ENCODE measurements at regions of chr1 and their contacts with region 1.

Region 1: DNA sequence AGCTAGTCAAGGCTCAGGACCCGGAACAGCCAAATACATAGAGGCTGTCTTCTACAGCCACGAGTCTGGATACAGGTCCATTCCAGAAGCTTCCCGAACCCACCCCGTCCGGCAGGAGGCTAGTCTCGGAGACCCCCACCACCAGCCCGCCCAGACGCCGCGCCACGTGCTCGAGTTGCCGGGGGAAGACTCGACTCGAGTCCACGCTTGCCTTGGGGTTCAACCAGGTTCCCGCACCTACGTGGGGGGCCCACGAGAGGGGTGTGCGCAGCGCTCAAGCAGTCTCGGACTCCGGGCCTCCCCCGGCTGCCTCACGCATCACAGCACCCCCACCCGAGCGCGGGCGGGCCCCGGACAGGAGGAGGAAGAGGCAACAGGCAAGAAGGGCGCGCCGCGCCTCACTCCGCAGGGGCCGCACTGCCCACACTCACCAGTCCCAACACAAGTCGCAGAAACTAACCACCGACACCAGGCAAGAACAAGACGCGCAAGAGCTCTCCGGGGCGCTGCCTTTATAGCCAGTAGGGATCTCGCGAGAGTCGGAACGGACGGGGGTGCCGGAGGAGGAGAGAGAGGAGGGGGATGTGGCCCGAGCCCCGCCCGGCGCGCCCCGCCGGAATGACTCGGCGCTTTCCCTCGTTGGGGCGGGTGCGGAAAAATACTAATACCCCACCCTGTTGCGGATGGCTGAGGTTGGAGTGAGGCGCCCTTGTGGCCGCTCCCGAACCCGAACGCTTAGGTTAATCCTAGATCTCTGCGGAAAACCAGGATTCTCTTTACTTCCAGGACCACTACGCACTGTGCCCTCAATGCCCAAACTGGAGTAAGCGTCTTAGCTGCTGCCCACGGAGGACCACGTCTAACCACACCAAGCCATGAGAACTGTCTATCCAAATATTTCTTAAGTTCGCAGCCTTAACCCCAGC is at the start of gene PRDX1:
- DNase-seq: peak; percentile 98 to 99
- ATAC-seq: peak; percentile 99
- H3K4me3 ChIP-seq: peak within 1 kb of the TSS; percentile 68 to 91
- H3K27ac ChIP-seq: peak within 1 kb of the TSS; percentile 43 to 100
- H3K4me1 ChIP-seq: peaks cover 0 to 2% of the 10 kb centered on the region in 2 donors
- H3K27me3 ChIP-seq: peaks cover 0 to 2% of the 10 kb centered on the region in 2 donors
- total RNA-seq, gene PRDX1: 279 to 286 TPM

Region 2: DNA sequence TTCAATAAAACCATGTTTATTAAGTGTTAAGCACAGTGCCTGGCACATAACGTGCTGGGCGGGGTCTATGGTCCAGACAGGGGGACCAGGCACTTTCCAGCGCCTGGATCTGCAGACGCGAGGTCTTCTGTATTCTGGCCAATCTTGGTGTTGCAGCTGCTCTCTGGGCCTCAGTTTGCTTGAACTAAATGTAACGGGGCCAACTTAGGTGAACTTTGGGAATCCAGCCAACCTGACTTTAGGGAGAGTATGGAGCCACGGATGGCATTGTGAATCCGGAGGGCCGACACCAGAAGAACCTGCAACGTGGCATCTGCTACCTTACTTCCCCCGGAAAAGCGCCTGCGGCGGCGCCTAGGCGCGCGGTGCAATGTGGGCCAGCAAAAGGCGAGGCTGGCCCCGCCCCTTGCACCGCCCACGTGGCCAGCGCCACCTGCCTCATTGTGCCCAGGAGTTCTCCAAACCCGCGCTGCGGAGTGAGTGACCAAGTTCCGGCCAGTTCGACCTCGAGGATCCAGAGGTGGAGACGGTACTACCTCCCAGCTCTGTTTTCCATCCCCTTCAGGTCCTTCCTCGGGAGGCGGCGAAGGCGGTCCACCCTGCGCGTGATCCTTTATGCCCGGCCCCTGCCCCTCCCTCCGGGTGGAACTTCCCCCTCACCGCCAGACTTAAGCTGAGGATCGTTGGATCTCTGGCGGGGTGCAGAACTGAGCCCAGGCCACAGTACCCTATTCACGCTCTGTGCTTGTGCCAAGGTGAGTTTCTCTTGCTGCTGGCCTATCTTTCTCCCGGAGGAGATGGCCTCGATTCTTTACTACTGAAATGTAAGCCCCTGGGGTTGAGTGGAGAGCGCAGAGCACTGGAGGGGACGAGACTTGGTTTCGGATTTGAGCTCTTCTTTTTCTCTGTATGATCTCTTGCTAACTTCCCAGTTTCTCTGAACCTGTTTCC is 29.0 kb after region 1 on chr1 and contains the start of gene AKR1A1:
- intact Hi-C with region 1: loop called in 1 of 2 experiments (anchors 2 kb)
- DNase-seq: peak; percentile 94
- ATAC-seq: peak; percentile 98
- H3K4me3 ChIP-seq: peak within 1 kb of the TSS; percentile 61 to 92
- H3K27ac ChIP-seq: peak within 1 kb of the TSS in 1 of 2 donors; percentile 76
- H3K4me1 ChIP-seq: no peaks in the 10 kb centered on the region
- H3K27me3 ChIP-seq: no peaks in the 10 kb centered on the region
- total RNA-seq, gene AKR1A1: 102 to 116 TPM

Measured in aorta (tissue), 5 donors.